Naive thymus-derived CD4-positive, alpha-beta T cell (primary cell): ENCODE measurements at regions of chr2 and their contacts with region 1.

Region 1: DNA sequence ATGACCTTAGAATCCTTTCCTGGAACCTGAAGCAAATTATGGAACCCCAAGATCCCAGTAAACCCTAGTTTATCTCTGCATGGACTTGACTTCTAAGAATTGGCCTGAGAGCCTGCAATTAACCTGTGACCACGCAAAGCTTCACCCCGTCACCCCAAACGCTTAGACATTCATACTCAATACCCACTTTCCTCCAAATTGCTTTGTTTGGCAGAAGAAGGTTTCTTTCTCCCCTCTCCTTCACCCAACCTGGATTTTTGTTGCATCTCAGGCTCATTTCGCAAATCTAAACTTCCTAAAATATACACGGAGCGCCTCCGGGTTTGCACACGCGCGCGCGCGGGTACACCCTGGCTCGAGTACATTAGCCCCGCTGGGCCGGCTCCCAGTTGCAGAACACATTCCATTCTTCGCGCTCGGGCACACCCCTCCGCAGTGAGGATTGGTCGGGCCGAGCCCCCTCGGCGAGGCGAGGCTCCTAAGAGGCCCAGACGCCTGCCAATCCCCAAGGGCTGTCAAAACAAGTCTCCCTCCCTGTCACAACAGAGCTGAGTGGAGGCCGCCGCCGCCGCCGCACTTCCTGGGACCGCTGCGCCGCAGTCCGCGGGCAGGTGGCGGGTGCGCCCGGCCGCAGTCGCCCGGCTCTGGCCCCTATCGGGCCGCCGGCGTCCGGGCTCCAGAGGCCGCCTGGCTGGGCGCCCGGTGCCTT is at the start of gene PLCL1:
- DNase-seq: peak; percentile 73 to 94 (median 91)
- ATAC-seq: peak; percentile 98
- H3K4me3 ChIP-seq: peak within 1 kb of the TSS; percentile 67
- H3K4me3 Mint-ChIP-seq: peak within 1 kb of the TSS; percentile 92 to 98 (median 96)
- H3K27ac ChIP-seq: peak within 1 kb of the TSS; percentile 89
- H3K27ac Mint-ChIP-seq: peak within 1 kb of the TSS; percentile 58 to 96 (median 92)
- H3K4me1 ChIP-seq: peaks cover 10 to 29% of the 10 kb centered on the region in 2 donors
- H3K4me1 Mint-ChIP-seq: peaks cover 33 to 55% (median 48%) of the 10 kb centered on the region in 7 donors
- H3K27me3 ChIP-seq: peaks cover 0 to 6% of the 10 kb centered on the region in 2 donors
- H3K27me3 Mint-ChIP-seq: peaks cover 0 to 49% (median 0%) of the 10 kb centered on the region in 5 donors
- total RNA-seq, gene PLCL1: 1.8 to 33.7 (median 28.5) TPM

Region 2: DNA sequence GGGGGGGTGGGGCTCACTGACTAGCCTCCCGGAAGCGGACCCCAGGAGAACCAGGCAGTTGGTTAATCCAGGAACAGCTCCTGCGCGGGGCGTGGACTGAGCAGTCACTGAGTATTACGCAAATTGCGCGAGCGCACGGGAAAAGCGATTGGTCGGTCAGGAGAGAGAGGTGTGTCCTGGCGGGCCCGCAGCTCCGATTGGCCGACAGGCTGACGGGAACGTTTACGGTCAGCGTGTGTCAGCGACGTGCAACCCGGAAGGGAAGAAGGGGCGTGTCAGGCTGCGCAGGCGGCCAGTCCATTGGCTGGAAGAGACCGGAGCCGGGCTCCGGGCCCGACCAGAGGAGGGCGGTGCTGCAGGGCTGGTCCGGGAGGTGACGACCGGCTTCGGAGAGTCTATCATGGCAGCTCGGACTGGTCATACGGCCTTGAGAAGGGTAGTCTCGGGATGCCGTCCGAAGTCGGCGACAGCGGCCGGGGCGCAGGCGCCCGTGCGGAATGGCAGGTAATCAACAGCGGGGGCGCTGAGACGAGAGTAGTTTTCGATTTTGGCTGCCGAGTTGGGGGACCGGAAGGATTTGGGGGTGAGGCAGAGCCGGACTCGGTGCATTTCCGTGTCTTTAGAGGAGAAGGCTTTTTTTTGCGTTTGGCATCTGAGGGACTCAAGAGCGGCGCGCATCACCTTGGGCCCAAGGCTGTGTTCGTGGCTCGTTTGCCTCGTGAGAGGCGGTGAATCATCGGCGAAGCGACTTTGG is 350.9 kb before region 1 on chr2 and contains the start of gene COQ10B:
- CTCF ChIA-PET with region 1: no interaction called
- POLR2A ChIA-PET with region 1: no interaction called
- intact Hi-C with region 1: loop called in 1 of 2 experiments (anchors 1 kb)
- DNase-seq: peak; percentile 87 to 99 (median 98)
- ATAC-seq: peak; percentile 92
- H3K4me3 ChIP-seq: peak within 1 kb of the TSS; percentile 92
- H3K4me3 Mint-ChIP-seq: peak within 1 kb of the TSS; percentile 92 to 100 (median 99)
- H3K27ac ChIP-seq: peak within 1 kb of the TSS; percentile 96
- H3K27ac Mint-ChIP-seq: peak within 1 kb of the TSS; percentile 97 to 100 (median 100)
- H3K4me1 ChIP-seq: peaks cover 16% of the 10 kb centered on the region in 2 donors
- H3K4me1 Mint-ChIP-seq: peaks cover 25 to 56% (median 47%) of the 10 kb centered on the region in 7 donors
- H3K27me3 ChIP-seq: no peaks in the 10 kb centered on the region
- H3K27me3 Mint-ChIP-seq: peaks cover 0 to 2% (median 0%) of the 10 kb centered on the region in 5 donors
- total RNA-seq, gene COQ10B: 22.9 to 57.2 (median 30.5) TPM

Region 3: DNA sequence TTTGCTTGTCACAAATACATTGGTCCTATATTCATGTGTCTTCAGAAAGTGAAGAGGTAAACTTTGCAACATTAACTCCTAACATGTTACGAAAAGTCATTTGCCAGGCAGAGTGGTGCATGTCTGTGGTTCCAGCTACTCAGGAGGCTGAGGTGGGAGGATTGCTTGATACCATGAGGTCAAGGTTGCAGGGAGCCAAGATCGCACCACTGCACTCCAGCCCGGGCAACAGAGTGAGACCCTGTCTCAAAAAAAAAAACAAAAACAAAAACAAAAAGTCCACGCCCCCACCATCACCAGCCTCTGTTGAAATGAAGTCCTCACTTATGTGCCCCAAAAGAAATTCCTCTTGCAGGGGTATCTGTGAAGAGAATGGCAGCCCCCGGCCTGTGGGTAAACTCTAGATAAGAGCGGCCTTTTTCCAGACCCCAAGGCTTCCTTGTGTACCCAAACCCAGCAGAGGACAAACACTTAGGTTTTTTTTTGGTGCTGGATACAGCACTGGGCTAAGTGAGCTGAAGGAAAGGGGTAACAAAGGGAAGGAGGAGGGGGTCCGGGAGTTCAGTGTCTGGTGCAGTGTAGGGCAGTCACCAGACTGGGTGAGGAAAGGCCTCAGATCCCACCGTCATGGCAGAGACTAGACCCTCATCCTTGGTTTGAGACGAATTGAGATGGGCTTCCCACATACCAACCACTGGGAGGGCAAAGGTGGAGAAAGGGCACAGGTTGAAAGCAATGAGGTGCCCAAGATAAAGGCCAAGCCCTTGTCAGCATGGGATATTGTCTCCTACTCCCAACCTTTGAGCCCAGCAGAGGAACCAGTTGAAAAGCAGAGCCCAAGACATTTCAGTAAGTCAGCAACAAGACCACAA is 323.8 kb before region 1 on chr2:
- CTCF ChIA-PET with region 1: no interaction called
- POLR2A ChIA-PET with region 1: no interaction called
- intact Hi-C with region 1: no loop called
- DNase-seq: no peak
- ATAC-seq: peak; percentile 17
- H3K4me3 ChIP-seq: no peak overlapping the region
- H3K4me3 Mint-ChIP-seq: no peak overlapping the region
- H3K27ac ChIP-seq: no peak overlapping the region
- H3K27ac Mint-ChIP-seq: peak overlapping the region in 4 of 9 donors; percentile 14 to 79 (median 43)
- H3K4me1 ChIP-seq: no peaks in the 10 kb centered on the region
- H3K4me1 Mint-ChIP-seq: peaks cover 0 to 18% (median 0%) of the 10 kb centered on the region in 7 donors
- H3K27me3 ChIP-seq: no peaks in the 10 kb centered on the region
- H3K27me3 Mint-ChIP-seq: no peaks in the 10 kb centered on the region

Region 4: GRCh38 chr2:197873293-197873701 is 69.1 kb after region 1 on chr2:
- CTCF ChIA-PET with region 1: no interaction called
- POLR2A ChIA-PET with region 1: interaction called, 10 read pairs
- intact Hi-C with region 1: loop called in 1 of 2 experiments (anchors 1 kb)
- DNase-seq: no peak
- ATAC-seq: no peak
- H3K4me3 ChIP-seq: no peak overlapping the region
- H3K4me3 Mint-ChIP-seq: peak overlapping the region in 1 of 10 donors; percentile 33
- H3K27ac ChIP-seq: no peak overlapping the region
- H3K27ac Mint-ChIP-seq: peak overlapping the region in 3 of 9 donors; percentile 28 to 62 (median 47)
- H3K4me1 ChIP-seq: peaks cover 0 to 34% of the 10 kb centered on the region in 2 donors
- H3K4me1 Mint-ChIP-seq: peaks cover 29 to 92% (median 85%) of the 10 kb centered on the region in 7 donors
- H3K27me3 ChIP-seq: no peaks in the 10 kb centered on the region
- H3K27me3 Mint-ChIP-seq: no peaks in the 10 kb centered on the region

Region 5: GRCh38 chr2:197946562-197946961 is 142.4 kb after region 1 on chr2:
- CTCF ChIA-PET with region 1: no interaction called
- POLR2A ChIA-PET with region 1: no interaction called
- intact Hi-C with region 1: loop called in 1 of 2 experiments (anchors 5 kb)
- DNase-seq: no peak
- ATAC-seq: no peak
- H3K4me3 ChIP-seq: no peak overlapping the region
- H3K4me3 Mint-ChIP-seq: peak overlapping the region in 2 of 10 donors; percentile 19 to 33
- H3K27ac ChIP-seq: no peak overlapping the region
- H3K27ac Mint-ChIP-seq: peak overlapping the region in 3 of 9 donors; percentile 41 to 77 (median 48)
- H3K4me1 ChIP-seq: peaks cover 0 to 34% of the 10 kb centered on the region in 2 donors
- H3K4me1 Mint-ChIP-seq: peaks cover 12 to 95% (median 89%) of the 10 kb centered on the region in 7 donors
- H3K27me3 ChIP-seq: no peaks in the 10 kb centered on the region
- H3K27me3 Mint-ChIP-seq: peaks cover 0 to 2% (median 0%) of the 10 kb centered on the region in 5 donors

Region 6: GRCh38 chr2:198053776-198054698 is 249.8 kb after region 1 on chr2:
- CTCF ChIA-PET with region 1: interaction called, 6 read pairs
- POLR2A ChIA-PET with region 1: no interaction called
- intact Hi-C with region 1: loop called (anchors 1 kb)
- DNase-seq: peak in 8 of 9 donors; percentile 23 to 62 (median 44)
- ATAC-seq: peak; percentile 77
- H3K4me3 ChIP-seq: no peak overlapping the region
- H3K4me3 Mint-ChIP-seq: no peak overlapping the region
- H3K27ac ChIP-seq: no peak overlapping the region
- H3K27ac Mint-ChIP-seq: peak overlapping the region in 4 of 9 donors; percentile 17 to 46 (median 30)
- H3K4me1 ChIP-seq: no peaks in the 10 kb centered on the region
- H3K4me1 Mint-ChIP-seq: peaks cover 3 to 67% (median 36%) of the 10 kb centered on the region in 7 donors
- H3K27me3 ChIP-seq: no peaks in the 10 kb centered on the region
- H3K27me3 Mint-ChIP-seq: no peaks in the 10 kb centered on the region

Region 7: GRCh38 chr2:198203329-198204069 is 399.3 kb after region 1 on chr2:
- CTCF ChIA-PET with region 1: no interaction called
- POLR2A ChIA-PET with region 1: no interaction called
- intact Hi-C with region 1: no loop called
- DNase-seq: no peak
- ATAC-seq: no peak
- H3K4me3 ChIP-seq: no peak overlapping the region
- H3K4me3 Mint-ChIP-seq: no peak overlapping the region
- H3K27ac ChIP-seq: no peak overlapping the region
- H3K27ac Mint-ChIP-seq: no peak overlapping the region
- H3K4me1 ChIP-seq: no peaks in the 10 kb centered on the region
- H3K4me1 Mint-ChIP-seq: no peaks in the 10 kb centered on the region
- H3K27me3 ChIP-seq: no peaks in the 10 kb centered on the region
- H3K27me3 Mint-ChIP-seq: peaks cover 0 to 4% (median 0%) of the 10 kb centered on the region in 5 donors

Region 8: GRCh38 chr2:199471443-199472057 is 1667.3 kb after region 1 on chr2:
- CTCF ChIA-PET with region 1: no interaction called
- POLR2A ChIA-PET with region 1: no interaction called
- intact Hi-C with region 1: loop called in 1 of 2 experiments (anchors 5 kb)
- DNase-seq: peak in 1 of 9 donors; percentile 46
- ATAC-seq: peak; percentile 58
- H3K4me3 ChIP-seq: no peak overlapping the region
- H3K4me3 Mint-ChIP-seq: peak overlapping the region in 2 of 10 donors; percentile 6 to 45
- H3K27ac ChIP-seq: no peak overlapping the region
- H3K27ac Mint-ChIP-seq: no peak overlapping the region
- H3K4me1 ChIP-seq: peaks cover 0 to 19% of the 10 kb centered on the region in 2 donors
- H3K4me1 Mint-ChIP-seq: peaks cover 3 to 49% (median 26%) of the 10 kb centered on the region in 7 donors
- H3K27me3 ChIP-seq: peaks cover 3 to 44% of the 10 kb centered on the region in 2 donors
- H3K27me3 Mint-ChIP-seq: peaks cover 82 to 90% (median 85%) of the 10 kb centered on the region in 5 donors